ENCODE measurements at regions of chr6 and their contacts with region 1.

Region 1: DNA sequence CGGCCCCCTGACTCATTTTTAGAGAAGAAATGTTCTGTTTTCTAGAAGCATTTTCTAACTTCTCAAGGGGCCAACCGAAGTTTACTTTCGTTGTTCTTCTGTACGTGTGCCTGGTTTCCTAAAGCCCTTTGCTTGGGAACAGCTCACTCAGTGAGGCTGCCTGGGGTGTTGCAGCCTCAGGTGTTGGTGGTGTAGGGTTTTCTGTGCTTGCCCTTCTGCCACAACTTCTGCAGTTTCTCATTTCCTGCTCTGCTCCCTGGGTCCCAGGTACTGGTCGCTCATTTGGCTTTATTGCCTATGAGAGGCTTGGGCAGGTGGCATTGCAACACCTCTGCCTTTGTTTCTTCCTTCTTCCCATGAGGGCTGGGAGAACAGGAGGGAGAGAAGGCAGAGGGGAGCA is 278.3 kb downstream of the SOX4 start:
- DNase-seq: no peak
- H3K4me3 ChIP-seq: no peak overlapping the region
- H3K27ac ChIP-seq: no peak overlapping the region
- H3K4me1 ChIP-seq: peaks cover 0 to 6% (median 2%) of the 10 kb centered on the region in 4 donors
- H3K27me3 ChIP-seq: no peaks in the 10 kb centered on the region
- CTCF ChIP-seq: no peak
- EP300 ChIP-seq: no peak
- POLR2A ChIP-seq: no peak

Region 2: GRCh38 chr6:21396313-21396712 is 475.5 kb before region 1 on chr6:
- intact Hi-C with region 1: no loop called
- DNase-seq: no peak
- H3K4me3 ChIP-seq: no peak overlapping the region
- H3K27ac ChIP-seq: no peak overlapping the region
- H3K4me1 ChIP-seq: no peaks in the 10 kb centered on the region
- H3K27me3 ChIP-seq: no peaks in the 10 kb centered on the region
- CTCF ChIP-seq: no peak
- EP300 ChIP-seq: no peak
- POLR2A ChIP-seq: no peak

Region 3: GRCh38 chr6:21831521-21832291 is 40.1 kb before region 1 on chr6:
- intact Hi-C with region 1: loop called (anchors 1 kb)
- DNase-seq: no peak
- H3K4me3 ChIP-seq: no peak overlapping the region
- H3K27ac ChIP-seq: no peak overlapping the region
- H3K4me1 ChIP-seq: peaks cover 0 to 42% (median 31%) of the 10 kb centered on the region in 4 donors
- H3K27me3 ChIP-seq: no peaks in the 10 kb centered on the region
- CTCF ChIP-seq: no peak
- EP300 ChIP-seq: no peak
- POLR2A ChIP-seq: no peak

Measured in esophagus muscularis mucosa (tissue), 4 donors.